CD8-positive, alpha-beta memory T cell (primary cell): ENCODE measurements at regions of chr17 and their contacts with region 1.

Region 1: DNA sequence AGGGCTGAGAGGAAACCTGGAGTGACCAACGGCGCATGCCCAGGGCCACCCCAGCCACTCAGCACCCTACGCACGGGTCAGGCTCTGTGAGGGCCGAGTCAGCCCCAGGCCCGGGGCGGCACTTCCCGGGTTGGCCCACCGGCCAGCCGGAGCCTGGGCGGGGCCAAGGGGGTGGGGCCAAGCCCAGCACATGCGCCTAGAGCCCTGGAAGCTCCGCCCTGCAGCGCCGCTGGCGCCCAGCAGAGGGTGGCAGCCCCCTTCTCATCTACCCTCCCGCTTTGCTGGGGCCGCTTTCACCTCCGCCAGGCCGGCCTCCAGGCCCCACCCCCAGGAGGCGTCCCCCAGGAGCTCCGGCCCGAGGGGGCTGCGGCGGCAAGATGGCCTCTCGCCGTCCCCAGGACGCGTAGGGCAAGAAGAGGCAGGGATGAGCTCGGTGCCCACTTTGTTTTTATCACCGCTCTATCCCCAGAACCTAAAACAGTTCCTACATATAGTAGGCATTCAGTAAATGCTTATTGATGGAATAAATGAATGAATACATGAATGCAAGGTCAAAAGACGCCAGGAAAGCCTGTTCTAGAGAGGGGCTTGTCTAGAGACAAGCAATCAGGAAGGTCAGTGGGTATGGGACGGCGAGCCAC is 31.3 kb downstream of the MYO18A start:
- DNase-seq: peak; percentile 89 to 94 (median 92)
- H3K4me3 ChIP-seq: peak overlapping the region; percentile 68
- H3K4me3 Mint-ChIP-seq: peak overlapping the region; percentile 76 to 90 (median 80)
- H3K27ac ChIP-seq: peak overlapping the region; percentile 48
- H3K27ac Mint-ChIP-seq: peak overlapping the region; percentile 84 to 96 (median 92)
- H3K4me1 ChIP-seq: peaks cover 26% of the 10 kb centered on the region
- H3K4me1 Mint-ChIP-seq: peaks cover 32 to 56% (median 34%) of the 10 kb centered on the region in 3 donors
- H3K27me3 ChIP-seq: no peaks in the 10 kb centered on the region
- H3K27me3 Mint-ChIP-seq: no peaks in the 10 kb centered on the region

Region 2: GRCh38 chr17:29133146-29133713 is 15.7 kb before region 1 on chr17:
- CTCF ChIA-PET with region 1: interaction called, 28 read pairs
- POLR2A ChIA-PET with region 1: interaction called, 20 read pairs
- DNase-seq: no peak
- H3K4me3 ChIP-seq: no peak overlapping the region
- H3K4me3 Mint-ChIP-seq: no peak overlapping the region
- H3K27ac ChIP-seq: no peak overlapping the region
- H3K27ac Mint-ChIP-seq: peak overlapping the region in 3 of 8 donors; percentile 27 to 68 (median 66)
- H3K4me1 ChIP-seq: peaks cover 30% of the 10 kb centered on the region
- H3K4me1 Mint-ChIP-seq: peaks cover 39 to 71% (median 50%) of the 10 kb centered on the region in 3 donors
- H3K27me3 ChIP-seq: no peaks in the 10 kb centered on the region
- H3K27me3 Mint-ChIP-seq: no peaks in the 10 kb centered on the region

Region 3: GRCh38 chr17:29162738-29163341 is 13.9 kb after region 1 on chr17:
- CTCF ChIA-PET with region 1: interaction called, 21 read pairs
- POLR2A ChIA-PET with region 1: interaction called, 5 read pairs
- DNase-seq: no peak
- H3K4me3 ChIP-seq: no peak overlapping the region
- H3K4me3 Mint-ChIP-seq: no peak overlapping the region
- H3K27ac ChIP-seq: no peak overlapping the region
- H3K27ac Mint-ChIP-seq: no peak overlapping the region
- H3K4me1 ChIP-seq: peaks cover 12% of the 10 kb centered on the region
- H3K4me1 Mint-ChIP-seq: peaks cover 15 to 30% (median 16%) of the 10 kb centered on the region in 3 donors
- H3K27me3 ChIP-seq: no peaks in the 10 kb centered on the region
- H3K27me3 Mint-ChIP-seq: no peaks in the 10 kb centered on the region

Region 4: GRCh38 chr17:29180034-29180787 is 31.3 kb after region 1 on chr17 and contains the start of gene MYO18A:
- CTCF ChIA-PET with region 1: interaction called, 211 read pairs
- POLR2A ChIA-PET with region 1: interaction called, 14 read pairs
- DNase-seq: peak; percentile 68 to 83 (median 71)
- H3K4me3 ChIP-seq: peak within 1 kb of the TSS; percentile 46
- H3K4me3 Mint-ChIP-seq: peak within 1 kb of the TSS; percentile 65 to 91 (median 73)
- H3K27ac ChIP-seq: peak within 1 kb of the TSS; percentile 35
- H3K27ac Mint-ChIP-seq: peak within 1 kb of the TSS in 5 of 8 donors; percentile 10 to 63 (median 45)
- H3K4me1 ChIP-seq: peaks cover 17% of the 10 kb centered on the region
- H3K4me1 Mint-ChIP-seq: peaks cover 23 to 38% (median 26%) of the 10 kb centered on the region in 3 donors
- H3K27me3 ChIP-seq: no peaks in the 10 kb centered on the region
- H3K27me3 Mint-ChIP-seq: peaks cover 4% of the 10 kb centered on the region in 2 donors
- total RNA-seq, gene MYO18A: 34.0 to 39.7 TPM

Region 5: DNA sequence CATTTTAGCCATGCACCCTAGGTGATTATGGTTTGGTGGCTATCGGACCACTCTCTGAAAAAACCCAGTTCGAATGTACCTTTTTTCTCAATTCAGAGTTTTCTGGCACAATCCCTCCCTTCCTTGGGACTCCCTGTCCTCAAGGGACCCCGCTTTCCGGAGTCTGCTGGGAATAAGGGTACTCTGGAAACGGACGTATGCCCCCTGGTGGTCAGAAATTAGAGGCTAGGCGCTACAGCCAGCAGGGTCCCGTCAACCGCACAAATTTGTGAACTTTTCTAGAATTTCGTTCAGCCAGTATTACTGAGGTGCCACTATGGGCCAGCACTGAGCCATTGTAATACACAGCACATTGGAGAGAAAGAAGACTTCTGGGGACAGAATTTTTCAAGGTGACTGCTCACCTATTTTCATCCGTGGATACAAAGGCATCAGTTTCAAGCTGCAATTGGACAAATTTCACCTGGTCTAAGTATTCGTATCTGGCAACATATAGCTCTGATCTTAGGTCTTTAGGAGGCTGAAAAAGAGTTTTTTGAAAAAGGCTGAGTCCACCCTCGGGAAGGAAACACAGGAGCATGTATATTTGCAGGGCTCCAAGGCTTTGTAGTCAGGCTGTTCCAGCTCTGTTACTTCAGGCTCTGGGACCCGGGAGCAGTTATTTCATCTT is 70.6 kb after region 1 on chr17:
- CTCF ChIA-PET with region 1: interaction called, 159 read pairs
- POLR2A ChIA-PET with region 1: interaction called, 3 read pairs
- DNase-seq: peak; percentile 57 to 79 (median 63)
- H3K4me3 ChIP-seq: no peak overlapping the region
- H3K4me3 Mint-ChIP-seq: peak overlapping the region in 1 of 7 donors; percentile 13
- H3K27ac ChIP-seq: no peak overlapping the region
- H3K27ac Mint-ChIP-seq: peak overlapping the region in 3 of 8 donors; percentile 17 to 54 (median 26)
- H3K4me1 ChIP-seq: peaks cover 4% of the 10 kb centered on the region
- H3K4me1 Mint-ChIP-seq: peaks cover 8 to 10% (median 9%) of the 10 kb centered on the region in 3 donors
- H3K27me3 ChIP-seq: no peaks in the 10 kb centered on the region
- H3K27me3 Mint-ChIP-seq: peaks cover 0 to 7% of the 10 kb centered on the region in 2 donors